ENCODE measurements at regions of chr9 and their contacts with region 1.

Region 1: GRCh38 chr9:109574068-109574882 is 76.2 kb upstream of the PTPN3 start:
- DNase-seq: peak; percentile 47
- ATAC-seq: no peak
- H3K4me3 ChIP-seq: no peak overlapping the region
- H3K4me3 Mint-ChIP-seq: no peak overlapping the region
- H3K27ac ChIP-seq: no peak overlapping the region
- H3K27ac Mint-ChIP-seq: no peak overlapping the region
- H3K4me1 ChIP-seq: no peaks in the 10 kb centered on the region
- H3K4me1 Mint-ChIP-seq: no peaks in the 10 kb centered on the region
- H3K27me3 ChIP-seq: peaks cover 0 to 4% (median 0%) of the 10 kb centered on the region in 4 experiments
- H3K27me3 Mint-ChIP-seq: peaks cover 12% of the 10 kb centered on the region
- CTCF ChIP-seq: peak; percentile 82

Region 2: DNA sequence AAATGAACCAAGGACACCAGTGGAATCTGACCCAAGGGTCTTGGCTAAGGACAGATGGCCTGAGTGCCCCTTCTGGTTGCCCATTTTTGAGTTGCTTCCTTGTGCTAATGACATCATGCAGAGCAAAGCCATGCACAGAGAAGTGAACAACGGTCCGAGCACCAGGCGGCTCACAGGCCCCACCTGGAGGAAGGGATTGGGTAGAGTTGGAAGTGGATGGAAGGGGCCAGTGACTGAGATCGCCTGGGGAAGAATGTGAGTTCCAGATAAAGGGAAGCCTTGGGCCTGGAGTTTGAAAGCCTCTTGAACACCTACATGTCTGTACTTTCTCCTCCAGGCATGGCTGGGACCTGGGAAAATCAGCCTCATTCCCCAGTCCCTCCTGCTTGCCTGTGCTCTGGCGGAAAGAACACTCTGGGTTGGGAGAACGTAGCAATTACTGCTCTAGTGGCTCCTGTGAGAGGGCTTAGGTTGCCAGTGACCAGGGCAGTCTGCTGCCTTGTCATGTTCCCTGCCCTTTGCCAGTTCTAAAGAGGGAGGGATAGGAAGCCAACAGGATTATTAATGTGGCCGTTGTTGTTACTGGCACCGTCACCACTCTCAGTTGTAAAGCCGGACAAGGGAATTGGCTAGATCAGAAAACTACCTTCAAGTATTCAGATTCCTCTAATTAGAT is 13.7 kb before region 1 on chr9:
- CTCF ChIA-PET with region 1: no interaction called
- POLR2A ChIA-PET with region 1: no interaction called
- intact Hi-C with region 1: no loop called
- DNase-seq: no peak
- ATAC-seq: no peak
- H3K4me3 ChIP-seq: no peak overlapping the region
- H3K4me3 Mint-ChIP-seq: no peak overlapping the region
- H3K27ac ChIP-seq: no peak overlapping the region
- H3K27ac Mint-ChIP-seq: no peak overlapping the region
- H3K4me1 ChIP-seq: no peaks in the 10 kb centered on the region
- H3K4me1 Mint-ChIP-seq: no peaks in the 10 kb centered on the region
- H3K27me3 ChIP-seq: peaks cover 0 to 15% (median 3%) of the 10 kb centered on the region in 4 experiments
- H3K27me3 Mint-ChIP-seq: peaks cover 17% of the 10 kb centered on the region
- CTCF ChIP-seq: no peak

Region 3: DNA sequence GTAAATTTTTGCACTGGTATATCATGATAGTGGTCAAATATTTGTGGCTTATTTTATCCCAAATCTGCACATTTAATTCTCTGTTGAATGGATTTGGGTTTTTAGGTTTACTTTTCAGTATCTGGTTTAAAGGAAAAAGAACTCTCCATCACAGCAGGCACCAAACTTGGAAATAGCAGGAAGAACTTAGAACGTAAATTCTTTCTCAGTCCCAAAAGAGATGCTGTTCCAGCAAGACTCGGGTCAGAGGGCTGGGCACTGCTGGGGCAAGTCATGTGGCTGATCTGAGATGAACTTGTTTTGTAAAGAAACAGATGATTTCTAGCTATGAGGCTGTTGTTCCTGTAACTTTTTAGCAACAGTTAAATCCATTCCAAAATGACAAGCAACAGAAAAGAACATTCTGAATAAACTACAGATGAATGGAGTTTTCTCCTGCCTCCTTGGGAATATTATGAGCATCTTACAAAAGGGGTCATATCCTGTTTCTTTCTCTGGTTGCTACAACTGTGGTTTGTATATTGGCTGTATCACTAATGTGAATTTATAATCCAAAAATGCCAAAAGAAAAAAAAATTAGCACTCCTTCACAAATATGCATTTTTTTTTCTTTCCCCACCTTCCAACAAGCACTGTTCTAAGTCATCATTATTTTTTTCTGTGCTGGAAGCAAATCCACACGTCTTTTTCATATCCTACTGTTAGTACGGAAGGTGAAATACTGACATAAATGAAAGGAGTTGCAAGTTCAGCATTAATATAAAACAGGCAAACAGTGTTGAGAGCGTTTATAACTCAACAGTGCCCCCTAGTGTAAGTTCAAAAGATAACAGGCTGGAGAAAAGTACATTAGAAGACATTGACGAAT is 1724.7 kb after region 1 on chr9:
- CTCF ChIA-PET with region 1: no interaction called
- POLR2A ChIA-PET with region 1: no interaction called
- intact Hi-C with region 1: loop called (anchors 5 kb)
- DNase-seq: peak; percentile 25
- ATAC-seq: no peak
- H3K4me3 ChIP-seq: no peak overlapping the region
- H3K4me3 Mint-ChIP-seq: no peak overlapping the region
- H3K27ac ChIP-seq: no peak overlapping the region
- H3K27ac Mint-ChIP-seq: no peak overlapping the region
- H3K4me1 ChIP-seq: no peaks in the 10 kb centered on the region
- H3K4me1 Mint-ChIP-seq: no peaks in the 10 kb centered on the region
- H3K27me3 ChIP-seq: no peaks in the 10 kb centered on the region
- H3K27me3 Mint-ChIP-seq: peaks cover 6% of the 10 kb centered on the region
- CTCF ChIP-seq: peak; percentile 73